ENCODE measurements at regions of chr22 and their contacts with region 1.

Region 1: DNA sequence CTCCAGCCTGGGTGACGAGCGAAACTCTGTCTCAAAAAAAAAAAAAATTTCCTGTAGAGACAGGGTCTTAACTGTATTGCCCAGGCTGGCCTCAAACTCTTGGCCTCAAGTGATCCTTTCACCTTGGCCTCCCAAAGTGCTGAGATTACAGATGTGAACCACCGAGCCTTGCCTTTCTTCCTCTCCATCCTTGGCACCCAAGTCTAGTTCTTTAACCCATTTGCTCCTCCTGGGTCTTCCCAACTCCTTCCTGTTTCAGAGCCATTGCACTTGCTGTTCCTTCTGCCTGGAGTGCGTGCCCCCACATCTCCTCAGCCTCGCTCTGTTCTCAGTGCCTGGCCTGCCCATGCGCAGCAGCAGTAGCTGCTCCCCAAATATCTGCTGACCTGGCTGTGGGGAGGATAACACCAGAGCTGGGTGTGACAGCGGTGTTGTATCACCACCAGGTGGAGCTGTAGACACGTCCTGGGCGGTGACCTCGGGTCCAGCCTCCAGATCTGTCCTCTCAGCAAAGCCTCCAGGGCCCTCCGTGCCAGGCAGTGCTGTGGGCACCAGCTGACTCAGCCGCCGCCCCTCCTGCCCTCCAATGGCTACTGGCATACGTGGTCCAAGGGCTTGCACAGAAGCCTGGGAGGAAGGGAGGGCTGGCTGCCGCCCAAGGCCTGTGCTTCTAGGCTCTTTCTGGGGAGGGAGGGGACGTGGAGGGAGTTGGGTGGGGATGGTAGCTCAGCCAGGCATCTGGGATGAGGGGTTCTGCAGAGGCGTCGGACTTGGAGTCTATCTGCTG is 22.0 kb downstream of the TEF start:
- DNase-seq: peak; percentile 93
- H3K4me3 Mint-ChIP-seq: no peak overlapping the region
- H3K27ac Mint-ChIP-seq: peak overlapping the region; percentile 8
- H3K4me1 Mint-ChIP-seq: peaks cover 13% of the 10 kb centered on the region
- H3K27me3 Mint-ChIP-seq: no peaks in the 10 kb centered on the region
- CTCF ChIP-seq: peak; percentile 86

Region 2: DNA sequence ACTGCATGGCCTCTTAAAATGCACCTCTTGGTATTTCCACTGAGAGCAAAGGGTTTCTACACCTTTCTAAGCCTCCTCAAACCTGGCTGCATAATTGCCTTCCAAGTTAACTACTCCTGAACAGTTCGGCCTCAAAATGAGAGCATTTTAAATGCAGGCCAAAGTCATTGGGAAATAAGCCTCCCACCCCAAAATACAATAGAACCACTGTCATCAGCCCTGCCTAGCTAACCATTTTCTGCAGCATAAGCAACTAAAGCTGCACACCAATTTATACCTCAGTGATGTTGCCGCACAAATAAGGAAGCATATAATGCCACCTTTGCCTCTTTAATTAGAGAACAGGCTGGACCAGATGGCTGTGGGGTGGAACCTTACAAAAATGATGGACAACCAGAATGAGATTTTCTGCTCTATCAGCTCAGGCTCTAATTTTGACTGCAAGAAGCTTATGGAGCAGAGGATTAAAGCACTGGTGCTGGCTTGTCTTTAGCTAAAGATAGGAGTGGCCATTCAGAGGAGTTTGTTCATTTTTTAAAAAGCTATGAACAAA is 38.6 kb after region 1 on chr22:
- CTCF ChIA-PET with region 1: interaction called, 11 read pairs
- POLR2A ChIA-PET with region 1: interaction called, 58 read pairs
- intact Hi-C with region 1: no loop called
- DNase-seq: no peak
- H3K4me3 Mint-ChIP-seq: peak overlapping the region; percentile 96
- H3K27ac Mint-ChIP-seq: no peak overlapping the region
- H3K4me1 Mint-ChIP-seq: no peaks in the 10 kb centered on the region
- H3K27me3 Mint-ChIP-seq: no peaks in the 10 kb centered on the region
- CTCF ChIP-seq: no peak

Region 3: GRCh38 chr22:41448189-41448808 is 44.6 kb after region 1 on chr22:
- CTCF ChIA-PET with region 1: interaction called, 6 read pairs
- POLR2A ChIA-PET with region 1: interaction called, 58 read pairs
- intact Hi-C with region 1: no loop called
- DNase-seq: peak; percentile 100
- H3K4me3 Mint-ChIP-seq: peak overlapping the region; percentile 96
- H3K27ac Mint-ChIP-seq: peak overlapping the region; percentile 97
- H3K4me1 Mint-ChIP-seq: peaks cover 11% of the 10 kb centered on the region
- H3K27me3 Mint-ChIP-seq: no peaks in the 10 kb centered on the region
- CTCF ChIP-seq: no peak

Region 4: GRCh38 chr22:41501209-41501608 is 97.5 kb after region 1 on chr22:
- CTCF ChIA-PET with region 1: interaction called, 16 read pairs
- POLR2A ChIA-PET with region 1: no interaction called
- intact Hi-C with region 1: no loop called
- DNase-seq: peak; percentile 41
- H3K4me3 Mint-ChIP-seq: no peak overlapping the region
- H3K27ac Mint-ChIP-seq: no peak overlapping the region
- H3K4me1 Mint-ChIP-seq: peaks cover 8% of the 10 kb centered on the region
- H3K27me3 Mint-ChIP-seq: no peaks in the 10 kb centered on the region
- CTCF ChIP-seq: peak; percentile 24

Region 5: GRCh38 chr22:41526837-41527799 is 123.4 kb after region 1 on chr22:
- CTCF ChIA-PET with region 1: interaction called, 27 read pairs
- POLR2A ChIA-PET with region 1: interaction called, 5 read pairs
- intact Hi-C with region 1: no loop called
- DNase-seq: peak; percentile 40
- H3K4me3 Mint-ChIP-seq: no peak overlapping the region
- H3K27ac Mint-ChIP-seq: peak overlapping the region; percentile 54
- H3K4me1 Mint-ChIP-seq: no peaks in the 10 kb centered on the region
- H3K27me3 Mint-ChIP-seq: no peaks in the 10 kb centered on the region
- CTCF ChIP-seq: peak; percentile 76

Region 6: GRCh38 chr22:41532908-41533825 is 129.4 kb after region 1 on chr22:
- CTCF ChIA-PET with region 1: interaction called, 27 read pairs
- POLR2A ChIA-PET with region 1: interaction called, 5 read pairs
- intact Hi-C with region 1: no loop called
- DNase-seq: peak; percentile 64
- H3K4me3 Mint-ChIP-seq: no peak overlapping the region
- H3K27ac Mint-ChIP-seq: no peak overlapping the region
- H3K4me1 Mint-ChIP-seq: no peaks in the 10 kb centered on the region
- H3K27me3 Mint-ChIP-seq: no peaks in the 10 kb centered on the region
- CTCF ChIP-seq: peak; percentile 73

Measured in MCF 10A (cell line).